Activated naive CD4-positive, alpha-beta T cell treated with anti-CD3 and anti-CD28 coated beads for 36 hours (primary cell): ENCODE measurements at regions of chr6 and their contacts with region 1.

Region 1: GRCh38 chr6:117265410-117266256 is at the start of gene VGLL2:
- DNase-seq: no peak
- H3K4me3 Mint-ChIP-seq: peak within 1 kb of the TSS; percentile 51
- H3K27ac Mint-ChIP-seq: no peak within 1 kb of the TSS
- H3K4me1 Mint-ChIP-seq: peaks cover 8% of the 10 kb centered on the region
- H3K27me3 Mint-ChIP-seq: peaks cover 85% of the 10 kb centered on the region
- total RNA-seq, gene VGLL2: not detected

Region 2: DNA sequence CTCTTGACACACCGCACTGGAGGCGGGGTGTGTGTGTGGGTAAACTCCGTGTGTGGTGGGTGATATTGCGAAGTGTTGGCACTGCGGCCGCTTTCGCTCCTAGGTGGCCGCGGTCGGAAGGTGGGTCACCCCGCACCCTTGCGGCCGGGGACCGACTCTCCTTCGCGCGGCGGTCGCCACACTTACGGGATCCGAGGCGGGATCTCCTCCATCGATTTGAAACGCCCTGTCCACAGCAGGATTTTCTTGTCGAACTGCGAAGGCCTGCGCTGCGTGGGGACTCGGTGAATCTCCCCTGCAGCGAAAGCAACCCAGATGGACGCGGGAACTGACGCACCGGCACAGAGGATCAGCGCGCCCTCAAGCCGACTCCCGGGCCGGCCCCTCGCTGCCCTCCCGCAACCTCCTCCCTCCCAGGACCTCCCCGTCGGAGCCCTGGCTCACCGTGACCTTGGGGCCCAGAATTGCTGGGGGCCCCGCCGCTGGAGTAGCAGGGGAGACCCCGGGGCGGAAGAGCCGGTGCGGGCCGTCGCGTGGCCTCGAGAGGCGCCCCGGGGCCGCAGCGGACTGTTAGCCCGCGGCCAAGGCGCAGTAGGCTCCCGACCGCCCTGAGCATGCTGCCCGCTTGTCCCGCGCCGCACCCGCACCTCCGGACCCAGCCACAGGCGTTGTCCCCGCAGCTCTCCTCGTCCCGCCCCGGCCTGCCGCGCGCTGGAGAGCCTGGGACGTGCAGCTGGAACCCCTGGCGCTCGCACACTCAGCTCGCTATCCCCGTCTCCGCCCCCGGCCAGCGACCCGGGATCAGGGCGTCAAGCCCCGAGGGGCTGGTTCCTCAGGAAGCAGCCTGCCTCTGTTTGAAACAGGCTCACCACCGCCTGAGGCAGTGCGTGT is 500.4 kb before region 1 on chr6 and contains the start of gene FAM162B:
- CTCF ChIA-PET with region 1: no interaction called
- intact Hi-C with region 1: loop called (anchors 5 kb)
- DNase-seq: peak; percentile 14
- H3K4me3 Mint-ChIP-seq: peak within 1 kb of the TSS; percentile 61
- H3K27ac Mint-ChIP-seq: no peak within 1 kb of the TSS
- H3K4me1 Mint-ChIP-seq: peaks cover 10% of the 10 kb centered on the region
- H3K27me3 Mint-ChIP-seq: peaks cover 35% of the 10 kb centered on the region
- total RNA-seq, gene FAM162B: not detected

Region 3: GRCh38 chr6:116779573-116780164 is 486.0 kb before region 1 on chr6:
- CTCF ChIA-PET with region 1: no interaction called
- intact Hi-C with region 1: loop called (anchors 1 kb)
- DNase-seq: no peak
- H3K4me3 Mint-ChIP-seq: no peak overlapping the region
- H3K27ac Mint-ChIP-seq: no peak overlapping the region
- H3K4me1 Mint-ChIP-seq: no peaks in the 10 kb centered on the region
- H3K27me3 Mint-ChIP-seq: peaks cover 9% of the 10 kb centered on the region